T-cell (primary cell): ENCODE measurements at regions of chr11 and their contacts with region 1.

Region 1: DNA sequence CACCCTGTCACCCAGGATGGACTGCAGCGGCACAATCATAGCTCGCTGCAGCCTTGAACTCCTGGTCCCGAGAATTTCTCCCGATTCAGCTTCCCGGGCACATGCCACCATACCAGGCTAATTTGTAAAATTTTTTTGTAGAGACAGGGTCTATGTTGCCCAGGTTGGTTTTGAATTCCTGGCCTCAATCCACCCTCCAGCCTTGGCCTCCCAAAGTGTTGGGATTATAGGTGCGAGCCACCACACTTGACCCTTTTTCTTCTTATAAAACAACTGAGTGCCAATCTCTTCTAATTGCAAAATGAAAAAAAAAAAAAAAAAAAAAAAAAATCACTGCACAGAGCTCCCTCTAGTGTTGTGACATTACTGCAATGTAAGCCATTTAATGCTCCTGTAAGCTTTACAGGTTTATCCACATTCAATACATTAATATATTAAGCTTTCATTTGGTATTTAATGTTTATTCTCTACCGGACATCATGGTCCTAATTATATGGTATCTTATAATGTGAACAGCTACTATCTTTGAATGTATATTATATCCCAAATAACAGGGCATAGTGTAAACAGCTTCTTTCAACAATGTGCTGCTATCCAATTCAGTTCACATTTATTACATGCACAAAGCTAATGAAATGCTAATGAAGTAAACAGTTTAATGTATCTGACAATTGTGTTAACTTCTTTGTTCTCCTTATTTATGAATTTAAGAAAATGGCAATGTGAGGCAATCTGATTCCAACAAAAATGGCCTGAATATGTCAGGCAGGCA is 44.6 kb downstream of the COPB1 start:
- DNase-seq: peak in 2 of 35 experiments; percentile 8 to 58
- ATAC-seq: peak in 2 of 4 experiments; percentile 16 to 52
- H3K4me3 ChIP-seq: no peak overlapping the region
- H3K4me3 Mint-ChIP-seq: no peak overlapping the region
- H3K27ac ChIP-seq: no peak overlapping the region
- H3K27ac Mint-ChIP-seq: no peak overlapping the region
- H3K4me1 ChIP-seq: peaks cover 0 to 4% of the 10 kb centered on the region in 2 experiments
- H3K4me1 Mint-ChIP-seq: peaks cover 0 to 5% (median 0%) of the 10 kb centered on the region in 3 donors
- H3K27me3 ChIP-seq: no peaks in the 10 kb centered on the region
- H3K27me3 Mint-ChIP-seq: no peaks in the 10 kb centered on the region

Region 2: GRCh38 chr11:13772223-13773046 is 682.6 kb before region 1 on chr11:
- CTCF ChIA-PET with region 1: interaction called, 7 to 14 read pairs
- POLR2A ChIA-PET with region 1: no interaction called
- DNase-seq: peak in 21 of 35 experiments; percentile 1 to 87 (median 22)
- ATAC-seq: peak; percentile 69 to 82 (median 72)
- H3K4me3 ChIP-seq: no peak overlapping the region
- H3K4me3 Mint-ChIP-seq: no peak overlapping the region
- H3K27ac ChIP-seq: no peak overlapping the region
- H3K27ac Mint-ChIP-seq: no peak overlapping the region
- H3K4me1 ChIP-seq: no peaks in the 10 kb centered on the region
- H3K4me1 Mint-ChIP-seq: peaks cover 7 to 11% (median 10%) of the 10 kb centered on the region in 3 donors
- H3K27me3 ChIP-seq: no peaks in the 10 kb centered on the region
- H3K27me3 Mint-ChIP-seq: peaks cover 3% of the 10 kb centered on the region in 2 donors

Region 3: GRCh38 chr11:14288189-14288935 is 166.7 kb before region 1 on chr11:
- CTCF ChIA-PET with region 1: interaction called in 1 of 2 experiments, 10 read pairs
- POLR2A ChIA-PET with region 1: no interaction called
- DNase-seq: no peak
- ATAC-seq: no peak
- H3K4me3 ChIP-seq: no peak overlapping the region
- H3K4me3 Mint-ChIP-seq: peak overlapping the region in 1 of 3 donors; percentile 67
- H3K27ac ChIP-seq: peak overlapping the region; percentile 14
- H3K27ac Mint-ChIP-seq: peak overlapping the region; percentile 83 to 91
- H3K4me1 ChIP-seq: no peaks in the 10 kb centered on the region
- H3K4me1 Mint-ChIP-seq: peaks cover 8 to 19% (median 16%) of the 10 kb centered on the region in 3 donors
- H3K27me3 ChIP-seq: no peaks in the 10 kb centered on the region
- H3K27me3 Mint-ChIP-seq: no peaks in the 10 kb centered on the region

Region 4: GRCh38 chr11:14308114-14308896 is 146.7 kb before region 1 on chr11:
- CTCF ChIA-PET with region 1: interaction called, 36 to 140 read pairs
- POLR2A ChIA-PET with region 1: interaction called, 4 to 5 read pairs
- DNase-seq: peak in 1 of 35 experiments; percentile 59
- ATAC-seq: peak; percentile 72 to 80 (median 76)
- H3K4me3 ChIP-seq: no peak overlapping the region
- H3K4me3 Mint-ChIP-seq: no peak overlapping the region
- H3K27ac ChIP-seq: no peak overlapping the region
- H3K27ac Mint-ChIP-seq: no peak overlapping the region
- H3K4me1 ChIP-seq: peaks cover 0 to 7% of the 10 kb centered on the region in 2 experiments
- H3K4me1 Mint-ChIP-seq: peaks cover 9 to 34% (median 10%) of the 10 kb centered on the region in 3 donors
- H3K27me3 ChIP-seq: no peaks in the 10 kb centered on the region
- H3K27me3 Mint-ChIP-seq: no peaks in the 10 kb centered on the region

Region 5: DNA sequence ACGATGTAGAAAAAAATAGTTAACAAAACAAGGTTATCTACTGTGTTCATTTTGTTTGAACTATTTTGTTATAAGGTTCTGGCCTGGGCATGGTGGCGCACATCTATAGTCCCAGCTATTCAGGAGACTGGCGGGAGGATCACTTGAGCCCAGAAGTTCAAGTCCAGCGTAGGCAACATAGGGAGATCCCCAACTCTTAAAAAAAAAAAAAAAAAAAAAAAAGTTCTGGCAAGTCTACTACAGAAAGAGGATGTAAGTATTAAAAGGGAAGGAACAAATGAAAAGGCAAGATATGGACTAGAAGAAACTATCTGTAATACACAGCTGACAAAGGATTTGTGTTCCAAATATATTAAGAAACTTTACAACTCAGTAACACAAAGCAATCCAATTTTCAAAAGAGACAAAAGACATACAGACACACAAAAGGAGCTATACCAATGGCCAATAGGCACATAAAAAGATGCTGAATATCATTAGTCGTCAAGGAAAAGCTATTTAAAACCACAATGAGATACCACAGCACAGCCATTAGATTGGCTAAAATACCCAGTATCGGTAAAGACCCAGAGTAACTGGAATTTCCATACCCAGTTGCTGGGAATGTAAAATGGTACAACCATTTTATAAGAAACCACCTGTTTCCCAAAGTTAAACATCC is 123.4 kb before region 1 on chr11:
- CTCF ChIA-PET with region 1: no interaction called
- POLR2A ChIA-PET with region 1: no interaction called
- DNase-seq: no peak
- ATAC-seq: no peak
- H3K4me3 ChIP-seq: no peak overlapping the region
- H3K4me3 Mint-ChIP-seq: no peak overlapping the region
- H3K27ac ChIP-seq: no peak overlapping the region
- H3K27ac Mint-ChIP-seq: no peak overlapping the region
- H3K4me1 ChIP-seq: peaks cover 0 to 5% of the 10 kb centered on the region in 2 experiments
- H3K4me1 Mint-ChIP-seq: peaks cover 41 to 48% (median 44%) of the 10 kb centered on the region in 3 donors
- H3K27me3 ChIP-seq: no peaks in the 10 kb centered on the region
- H3K27me3 Mint-ChIP-seq: no peaks in the 10 kb centered on the region

Region 6: DNA sequence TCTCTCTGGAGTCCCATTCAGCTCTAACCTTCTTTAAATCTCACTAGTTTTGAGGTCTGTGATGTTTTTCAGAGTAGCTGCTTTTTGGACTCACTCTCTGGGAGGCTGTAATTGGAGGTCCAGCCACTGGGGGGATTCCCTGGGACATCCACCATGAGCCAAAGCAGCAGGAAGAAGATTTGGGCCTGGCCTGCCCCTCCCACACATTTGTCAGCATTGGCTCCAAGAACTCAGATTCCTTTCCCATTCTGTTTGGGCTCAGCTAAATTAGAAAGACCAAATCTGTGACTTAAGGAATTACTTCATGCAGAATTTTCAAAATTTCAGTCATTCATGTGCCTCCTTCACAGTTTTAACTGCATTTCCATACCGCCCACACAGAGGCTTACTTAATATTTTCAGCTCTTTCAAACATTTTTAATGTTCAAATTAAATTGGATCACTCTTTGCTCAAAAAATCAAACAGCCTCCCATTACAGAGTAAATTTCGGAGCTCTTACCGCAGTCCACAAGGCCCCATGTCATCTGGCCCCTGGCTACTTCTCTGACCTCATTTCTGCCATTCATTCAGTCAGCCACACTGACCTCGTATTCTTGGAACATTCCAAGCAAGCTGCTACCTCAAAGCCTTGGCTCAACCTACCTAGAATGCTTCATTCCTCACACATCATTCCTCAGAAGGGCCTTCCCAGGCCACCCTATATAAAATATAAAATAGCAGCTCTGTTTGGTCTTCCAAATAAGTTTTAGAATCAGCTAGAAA is 41.6 kb before region 1 on chr11:
- CTCF ChIA-PET with region 1: interaction called, 5 to 10 read pairs
- POLR2A ChIA-PET with region 1: no interaction called
- DNase-seq: no peak
- ATAC-seq: no peak
- H3K4me3 ChIP-seq: no peak overlapping the region
- H3K4me3 Mint-ChIP-seq: no peak overlapping the region
- H3K27ac ChIP-seq: no peak overlapping the region
- H3K27ac Mint-ChIP-seq: peak overlapping the region; percentile 18 to 19
- H3K4me1 ChIP-seq: peaks cover 10 to 29% of the 10 kb centered on the region in 2 experiments
- H3K4me1 Mint-ChIP-seq: peaks cover 24 to 59% (median 38%) of the 10 kb centered on the region in 3 donors
- H3K27me3 ChIP-seq: no peaks in the 10 kb centered on the region
- H3K27me3 Mint-ChIP-seq: no peaks in the 10 kb centered on the region